HEK293 (cell line): ENCODE measurements at regions of chr20 and their contacts with region 1.

Region 1: GRCh38 chr20:45798935-45799642 is 7.3 kb downstream of the DNTTIP1 start:
- H3K4me3 ChIP-seq: no peak overlapping the region
- H3K27ac ChIP-seq: no peak overlapping the region
- H3K4me1 ChIP-seq: no peaks in the 10 kb centered on the region
- CTCF ChIP-seq: peak; percentile 82

Region 2: DNA sequence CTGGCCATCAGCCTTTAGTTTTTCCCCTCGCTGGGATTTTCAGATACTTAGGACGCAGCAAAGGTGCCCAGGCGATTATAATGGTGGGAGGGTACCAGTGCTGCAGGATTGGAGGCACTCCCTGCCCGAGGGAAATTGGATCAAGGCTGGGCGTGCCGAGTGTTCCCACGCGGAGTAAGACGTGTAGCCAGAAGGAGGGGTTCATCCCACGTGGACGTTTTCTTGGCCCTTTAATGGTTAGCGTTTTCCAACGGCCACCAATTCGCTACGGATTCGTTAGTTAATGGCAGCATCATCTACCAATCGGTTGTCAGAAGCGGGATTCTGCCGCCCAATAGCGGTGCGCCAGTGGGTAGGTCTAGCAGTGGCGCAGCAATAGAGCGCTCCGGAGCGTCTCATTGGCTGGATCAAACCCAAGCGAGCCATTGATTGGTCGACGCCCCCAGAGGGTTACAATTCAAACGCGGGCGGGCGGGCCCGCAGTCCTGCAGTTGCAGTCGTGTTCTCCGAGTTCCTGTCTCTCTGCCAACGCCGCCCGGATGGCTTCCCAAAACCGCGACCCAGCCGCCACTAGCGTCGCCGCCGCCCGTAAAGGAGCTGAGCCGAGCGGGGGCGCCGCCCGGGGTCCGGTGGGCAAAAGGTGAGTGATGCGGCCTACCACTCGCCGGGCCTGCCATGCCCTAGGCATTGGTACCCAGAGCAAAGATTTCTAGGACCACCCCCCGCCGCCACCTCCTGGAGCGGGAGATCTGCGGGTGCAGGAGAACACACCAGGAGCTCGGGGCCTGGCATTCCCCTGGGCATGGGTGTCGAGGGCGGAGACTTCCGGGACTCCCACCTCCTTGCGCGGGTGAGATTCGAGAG is 13.3 kb after region 1 on chr20 and contains the start of gene UBE2C:
- CTCF ChIA-PET with region 1: interaction called, 22 read pairs
- POLR2A ChIA-PET with region 1: interaction called, 5 read pairs
- H3K4me3 ChIP-seq: peak within 1 kb of the TSS; percentile 88
- H3K27ac ChIP-seq: peak within 1 kb of the TSS; percentile 88
- H3K4me1 ChIP-seq: peaks cover 3% of the 10 kb centered on the region; the same call in 1 of the 2 replicates
- CTCF ChIP-seq: no peak

Region 3: DNA sequence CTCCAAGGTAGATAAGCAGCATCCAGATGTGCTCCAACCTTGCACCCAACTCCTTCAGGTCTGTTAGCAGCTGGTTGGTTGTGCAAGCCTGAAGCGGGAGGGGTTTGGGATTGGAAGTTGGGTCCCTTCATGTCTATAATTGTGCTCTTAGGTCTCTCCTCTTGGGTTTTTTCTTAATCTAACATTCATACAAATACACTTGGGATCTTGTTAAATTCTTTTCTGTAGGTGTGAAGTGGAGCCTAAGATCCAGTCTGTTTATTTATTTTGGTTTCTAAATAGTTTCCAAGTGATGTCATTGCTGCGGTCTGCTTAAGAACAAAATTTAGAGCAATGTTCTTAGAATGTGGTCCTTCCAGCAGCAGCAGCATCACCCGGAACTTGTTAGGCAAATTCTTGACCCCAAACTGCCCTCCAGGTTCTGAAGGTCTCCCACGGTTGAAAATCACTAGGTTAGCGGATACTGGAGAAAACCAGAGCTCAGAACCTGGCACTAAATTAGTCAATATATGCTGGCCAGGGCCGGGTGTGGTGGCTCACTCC is 18.6 kb after region 1 on chr20:
- CTCF ChIA-PET with region 1: interaction called, 21 read pairs
- POLR2A ChIA-PET with region 1: interaction called, 5 read pairs
- H3K4me3 ChIP-seq: no peak overlapping the region
- H3K27ac ChIP-seq: no peak overlapping the region
- H3K4me1 ChIP-seq: peaks cover 7% of the 10 kb centered on the region; the same call in 1 of the 2 replicates
- CTCF ChIP-seq: no peak

Region 4: DNA sequence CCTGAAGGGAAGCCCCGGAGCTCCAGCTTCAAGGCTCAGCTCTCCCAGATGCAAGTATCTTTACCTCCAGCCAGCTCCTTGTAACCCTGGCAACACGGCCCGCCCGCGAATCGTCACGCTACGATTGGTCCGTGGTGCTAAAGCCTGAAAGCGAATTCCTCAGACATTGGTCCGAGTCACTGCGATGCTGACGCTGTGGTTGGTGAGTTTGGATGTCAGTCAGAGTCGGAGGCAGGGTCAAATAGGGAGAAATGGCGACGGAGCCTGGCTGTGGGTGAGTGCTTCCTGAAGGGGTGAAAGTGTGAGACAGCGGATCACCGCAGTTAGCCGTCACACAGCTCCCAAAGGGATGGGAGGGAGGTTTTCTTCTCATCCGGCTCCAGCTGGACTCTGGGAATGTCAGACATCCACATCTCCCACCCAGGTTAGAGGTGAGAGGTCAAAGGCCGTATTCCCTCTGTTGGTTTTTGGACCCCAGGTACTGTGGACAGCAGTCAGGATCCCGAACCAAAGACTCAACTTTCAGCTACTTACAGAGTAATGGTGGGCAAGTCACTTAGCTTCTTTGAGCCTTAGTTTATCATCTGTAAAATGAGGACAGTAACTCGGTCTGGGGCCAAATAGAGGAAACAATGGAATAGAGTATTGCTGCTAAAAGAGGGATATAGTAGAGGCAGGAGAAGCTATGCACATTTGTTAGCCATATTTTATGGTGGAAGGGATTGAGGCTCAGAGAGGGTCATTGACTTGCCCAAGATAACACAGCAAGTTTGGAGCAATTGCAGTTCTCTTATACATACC is 82.1 kb after region 1 on chr20 and contains the start of gene ZSWIM1:
- CTCF ChIA-PET with region 1: interaction called, 16 read pairs
- POLR2A ChIA-PET with region 1: interaction called, 3 read pairs
- H3K4me3 ChIP-seq: peak within 1 kb of the TSS; percentile 53
- H3K27ac ChIP-seq: peak within 1 kb of the TSS; percentile 62
- H3K4me1 ChIP-seq: no peaks in the 10 kb centered on the region
- CTCF ChIP-seq: no peak

Region 5: DNA sequence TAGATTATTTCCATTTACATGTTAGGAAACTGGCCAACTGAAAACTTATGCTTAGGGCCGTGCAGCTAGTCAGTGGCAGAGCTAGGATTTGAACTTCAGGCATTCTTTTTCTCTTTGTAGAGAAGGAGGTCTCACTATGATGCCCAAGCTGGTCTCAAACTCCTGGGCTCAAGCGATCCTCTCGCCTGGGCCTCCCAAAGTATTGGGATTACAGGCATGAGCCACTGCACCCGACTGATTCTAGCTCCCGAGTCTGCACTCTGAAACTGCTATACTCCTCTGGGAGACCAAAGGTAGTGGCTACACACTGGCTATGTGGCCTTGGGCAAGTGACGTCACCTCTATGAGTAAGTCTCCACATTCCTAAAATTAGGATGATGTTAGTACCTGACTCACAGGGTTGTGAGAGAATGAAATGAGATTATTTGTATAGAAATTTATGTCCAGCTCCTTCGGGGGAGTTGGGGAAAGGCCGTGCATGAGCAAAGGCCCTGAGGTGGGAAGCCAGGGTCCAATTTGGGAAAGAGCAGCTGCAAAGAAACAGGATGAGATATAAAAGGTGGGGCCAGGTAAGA is 106.5 kb after region 1 on chr20:
- CTCF ChIA-PET with region 1: interaction called, 11 read pairs
- POLR2A ChIA-PET with region 1: no interaction called
- H3K4me3 ChIP-seq: no peak overlapping the region
- H3K27ac ChIP-seq: no peak overlapping the region
- H3K4me1 ChIP-seq: no peaks in the 10 kb centered on the region
- CTCF ChIP-seq: no peak

Region 6: DNA sequence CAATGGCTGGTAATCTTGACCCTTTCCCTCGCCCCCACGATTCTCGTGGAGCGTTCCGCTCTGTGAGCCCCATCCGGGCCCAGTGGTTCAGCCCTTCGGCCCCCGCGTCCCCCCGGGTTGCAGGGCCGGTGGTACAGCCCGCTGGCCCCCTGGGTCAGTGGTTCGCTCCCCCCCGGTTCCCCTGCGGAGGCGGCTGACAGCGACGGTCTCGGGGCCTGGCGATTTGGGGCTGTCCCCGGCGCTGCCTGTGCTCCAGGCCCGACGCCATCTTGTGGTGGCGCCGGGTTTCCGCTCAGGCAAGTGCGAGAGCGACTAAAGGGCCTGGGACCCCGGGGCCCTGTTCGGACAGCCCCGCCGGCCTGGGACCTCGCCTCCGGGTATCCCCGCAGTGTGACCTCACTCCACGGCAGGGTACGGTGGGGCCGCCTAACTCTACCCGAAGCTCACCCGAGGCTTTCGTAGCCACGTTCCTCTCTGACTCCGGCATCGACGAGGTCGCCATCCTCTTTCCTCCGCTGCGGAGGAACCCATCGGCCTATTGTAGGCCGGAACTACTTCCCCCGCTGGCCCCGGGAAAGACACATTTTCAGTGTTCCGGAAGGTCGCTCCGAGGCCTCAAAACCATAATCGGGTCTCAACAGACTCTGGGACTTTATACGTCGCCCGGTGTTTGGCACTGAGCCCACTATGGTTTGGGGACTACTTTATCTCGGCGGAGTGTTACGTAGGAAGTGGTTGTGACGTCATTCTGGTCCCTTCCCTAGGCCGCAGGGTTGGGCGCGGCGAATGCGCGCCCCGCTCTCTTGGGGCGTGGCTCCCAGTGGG is 172.8 kb after region 1 on chr20 and contains the start of gene ZNF335:
- CTCF ChIA-PET with region 1: interaction called, 13 read pairs
- POLR2A ChIA-PET with region 1: no interaction called
- H3K4me3 ChIP-seq: peak within 1 kb of the TSS; percentile 90
- H3K27ac ChIP-seq: peak within 1 kb of the TSS; percentile 92
- H3K4me1 ChIP-seq: no peaks in the 10 kb centered on the region
- CTCF ChIP-seq: peak; percentile 44; the same call in 1 of the 2 replicates